ENCODE measurements at regions of chr1 and their contacts with region 1.

Region 1: GRCh38 chr1:157806431-157807149 is 13.3 kb downstream of the FCRL1 start:
- DNase-seq: peak; percentile 60
- ATAC-seq: peak; percentile 91
- H3K4me3 Mint-ChIP-seq: peak overlapping the region; percentile 61
- H3K27ac Mint-ChIP-seq: peak overlapping the region; percentile 88
- H3K4me1 Mint-ChIP-seq: peaks cover 98% of the 10 kb centered on the region
- H3K27me3 Mint-ChIP-seq: no peaks in the 10 kb centered on the region
- CTCF ChIP-seq: no peak

Region 2: DNA sequence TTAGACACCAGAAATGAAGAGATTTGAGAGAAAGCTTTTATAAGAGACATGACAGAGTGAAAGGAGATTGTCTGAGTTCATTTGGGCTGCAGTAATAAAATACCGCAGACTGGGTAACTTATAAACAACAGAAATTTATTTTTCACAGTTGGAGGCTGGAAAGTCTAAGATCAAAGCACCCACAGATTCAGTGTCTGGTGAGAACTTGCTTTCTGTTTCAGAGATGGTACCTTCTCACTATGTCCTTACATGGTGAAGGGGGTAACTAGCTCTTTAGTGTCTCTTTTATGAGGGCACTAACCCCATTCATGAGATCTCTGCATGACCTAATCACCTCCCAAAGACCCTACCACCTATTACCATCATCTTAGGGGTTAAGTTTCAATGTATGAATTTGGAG is 177.8 kb before region 1 on chr1:
- CTCF ChIA-PET with region 1: no interaction called
- POLR2A ChIA-PET with region 1: no interaction called
- intact Hi-C with region 1: no loop called
- DNase-seq: no peak
- ATAC-seq: no peak
- H3K4me3 Mint-ChIP-seq: no peak overlapping the region
- H3K27ac Mint-ChIP-seq: no peak overlapping the region
- H3K4me1 Mint-ChIP-seq: peaks cover 20% of the 10 kb centered on the region
- H3K27me3 Mint-ChIP-seq: no peaks in the 10 kb centered on the region
- CTCF ChIP-seq: no peak

Region 3: DNA sequence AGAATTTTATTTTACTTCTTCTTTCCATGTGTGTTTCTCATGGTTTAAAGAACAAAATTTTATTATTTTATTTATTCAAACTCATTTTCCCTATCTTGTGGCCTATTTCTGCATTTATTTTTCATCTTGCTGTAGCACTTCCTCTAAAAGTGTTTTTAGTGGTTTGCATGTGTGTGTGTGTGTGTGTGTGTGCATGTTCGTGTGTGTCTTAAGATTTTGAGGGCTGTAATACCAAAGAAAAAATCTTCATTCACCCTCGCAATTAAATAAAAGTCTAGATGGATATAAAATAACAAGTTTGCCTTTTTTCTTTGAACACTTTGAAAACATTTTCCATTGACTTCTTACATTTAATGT is 81.4 kb before region 1 on chr1:
- CTCF ChIA-PET with region 1: no interaction called
- POLR2A ChIA-PET with region 1: interaction called, 10 read pairs
- intact Hi-C with region 1: loop called (anchors 2 kb)
- DNase-seq: no peak
- ATAC-seq: peak; percentile 17
- H3K4me3 Mint-ChIP-seq: peak overlapping the region; percentile 16
- H3K27ac Mint-ChIP-seq: peak overlapping the region; percentile 97
- H3K4me1 Mint-ChIP-seq: peaks cover 71% of the 10 kb centered on the region
- H3K27me3 Mint-ChIP-seq: no peaks in the 10 kb centered on the region
- CTCF ChIP-seq: no peak

Region 4: DNA sequence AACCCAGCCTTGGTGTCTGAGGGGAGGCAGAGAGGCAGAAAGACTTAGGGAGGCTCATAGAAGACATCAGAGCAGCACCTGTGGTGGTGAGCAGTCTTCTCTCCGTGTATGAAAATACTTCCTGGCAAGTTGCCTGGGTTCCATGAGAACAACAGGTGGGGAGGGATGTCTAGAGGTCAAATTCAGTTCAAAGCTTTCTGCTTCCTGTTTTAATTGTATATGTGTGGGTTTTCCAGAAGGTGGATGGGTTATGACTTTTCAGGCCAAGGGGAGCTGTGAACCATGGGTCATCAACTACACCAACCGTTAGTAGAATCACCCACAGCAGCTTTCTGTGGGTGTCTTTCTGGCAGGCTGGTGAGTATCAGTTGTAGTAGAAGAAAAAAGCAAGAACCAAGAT is 25.5 kb before region 1 on chr1:
- CTCF ChIA-PET with region 1: interaction called, 6 read pairs
- POLR2A ChIA-PET with region 1: interaction called, 42 read pairs
- intact Hi-C with region 1: loop called (anchors 1 kb)
- DNase-seq: no peak
- ATAC-seq: peak; percentile 22
- H3K4me3 Mint-ChIP-seq: peak overlapping the region; percentile 48
- H3K27ac Mint-ChIP-seq: peak overlapping the region; percentile 77
- H3K4me1 Mint-ChIP-seq: peaks cover 99% of the 10 kb centered on the region
- H3K27me3 Mint-ChIP-seq: no peaks in the 10 kb centered on the region
- CTCF ChIP-seq: no peak

Region 5: GRCh38 chr1:157831968-157832626 is 25.5 kb after region 1 on chr1:
- CTCF ChIA-PET with region 1: interaction called, 5 read pairs
- POLR2A ChIA-PET with region 1: interaction called, 11 read pairs
- intact Hi-C with region 1: no loop called
- DNase-seq: no peak
- ATAC-seq: no peak
- H3K4me3 Mint-ChIP-seq: no peak overlapping the region
- H3K27ac Mint-ChIP-seq: no peak overlapping the region
- H3K4me1 Mint-ChIP-seq: peaks cover 50% of the 10 kb centered on the region
- H3K27me3 Mint-ChIP-seq: no peaks in the 10 kb centered on the region
- CTCF ChIP-seq: no peak

Region 6: DNA sequence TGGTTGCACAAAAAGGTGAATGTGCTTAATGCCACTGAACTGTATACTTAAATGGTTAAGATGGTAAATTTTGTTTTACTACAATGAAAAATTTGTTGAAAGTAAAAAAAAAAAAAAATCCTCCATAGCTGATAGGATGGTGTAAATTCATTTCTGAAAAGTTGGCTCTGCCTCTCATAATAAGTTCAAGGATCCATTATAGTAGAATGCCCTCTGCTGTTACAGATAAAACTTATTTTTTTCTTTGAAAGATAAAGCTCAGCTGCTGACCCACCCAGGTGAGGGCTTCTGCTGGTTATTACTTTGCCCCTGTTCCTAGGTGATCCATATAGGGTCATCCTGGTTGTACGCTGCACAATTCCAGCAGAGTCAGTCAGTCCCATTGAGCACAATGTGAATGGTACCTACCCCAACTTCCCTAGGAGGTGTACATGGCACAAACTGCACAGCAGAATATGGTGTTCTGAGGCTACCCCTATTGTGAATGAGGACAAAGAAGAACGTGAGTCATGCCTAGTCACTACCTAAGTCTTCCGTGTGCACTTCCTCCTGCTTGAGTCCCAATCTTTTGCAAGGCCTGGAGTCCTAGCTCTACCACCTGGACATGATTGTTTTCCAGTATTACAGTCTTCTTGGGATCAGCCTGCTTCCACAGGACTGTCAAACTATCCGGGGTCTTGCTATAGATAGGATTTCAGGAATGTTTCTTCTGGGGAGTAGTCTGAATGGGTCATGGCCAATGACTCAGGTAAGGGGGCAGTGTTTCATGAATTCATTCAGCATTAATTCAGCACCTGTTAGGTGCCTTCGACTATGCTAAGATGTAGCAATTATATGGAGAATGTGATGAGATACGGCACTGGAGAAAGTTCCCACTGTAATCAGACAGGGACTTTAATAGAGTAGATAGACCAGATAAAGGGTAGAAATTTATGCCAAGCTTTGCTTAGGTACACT is 55.8 kb after region 1 on chr1:
- CTCF ChIA-PET with region 1: interaction called, 16 read pairs
- POLR2A ChIA-PET with region 1: interaction called, 4 read pairs
- intact Hi-C with region 1: no loop called
- DNase-seq: no peak
- ATAC-seq: peak; percentile 47
- H3K4me3 Mint-ChIP-seq: no peak overlapping the region
- H3K27ac Mint-ChIP-seq: peak overlapping the region; percentile 31
- H3K4me1 Mint-ChIP-seq: peaks cover 18% of the 10 kb centered on the region
- H3K27me3 Mint-ChIP-seq: no peaks in the 10 kb centered on the region
- CTCF ChIP-seq: no peak

Region 7: DNA sequence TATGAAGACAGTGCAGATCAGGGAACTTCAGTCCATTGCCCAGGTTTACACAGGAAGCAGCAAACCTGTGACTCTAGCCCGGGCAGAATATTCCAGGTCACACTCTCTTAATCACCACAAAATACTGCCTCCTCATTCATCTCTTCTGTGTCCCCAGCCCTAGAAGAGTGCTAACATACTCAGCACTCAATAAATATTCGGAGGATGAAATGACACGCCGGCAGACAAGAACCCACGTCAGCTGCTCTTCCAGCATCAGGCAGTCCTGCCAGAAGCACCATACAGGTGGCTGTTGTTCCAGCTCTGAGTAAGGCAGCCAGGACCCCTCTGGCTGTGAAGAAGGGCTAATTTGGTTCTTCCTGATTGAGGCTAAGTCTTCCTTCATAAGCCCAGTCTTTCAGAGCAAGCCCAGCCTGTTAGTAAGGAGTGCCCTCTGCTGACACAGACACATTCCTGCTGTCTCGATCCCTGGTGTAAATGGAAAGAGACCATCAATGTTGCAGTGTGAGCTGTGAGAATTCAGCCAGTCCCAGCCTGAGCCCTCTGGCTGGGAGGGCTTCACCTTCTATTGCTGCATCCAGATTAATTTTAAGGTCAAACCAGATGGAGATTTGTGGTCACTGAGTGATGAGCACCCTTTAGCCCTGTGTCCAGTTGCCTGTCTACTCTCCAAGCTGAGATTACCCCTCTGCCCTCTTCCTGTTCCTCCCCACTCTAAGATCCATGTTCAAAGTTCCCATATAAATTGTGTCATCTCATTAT is 141.9 kb after region 1 on chr1:
- CTCF ChIA-PET with region 1: no interaction called
- POLR2A ChIA-PET with region 1: no interaction called
- intact Hi-C with region 1: no loop called
- DNase-seq: no peak
- ATAC-seq: peak; percentile 77
- H3K4me3 Mint-ChIP-seq: no peak overlapping the region
- H3K27ac Mint-ChIP-seq: no peak overlapping the region
- H3K4me1 Mint-ChIP-seq: peaks cover 24% of the 10 kb centered on the region
- H3K27me3 Mint-ChIP-seq: peaks cover 6% of the 10 kb centered on the region
- CTCF ChIP-seq: peak; percentile 52